ENCODE measurements at regions of chr13 and their contacts with region 1.

Region 1: DNA sequence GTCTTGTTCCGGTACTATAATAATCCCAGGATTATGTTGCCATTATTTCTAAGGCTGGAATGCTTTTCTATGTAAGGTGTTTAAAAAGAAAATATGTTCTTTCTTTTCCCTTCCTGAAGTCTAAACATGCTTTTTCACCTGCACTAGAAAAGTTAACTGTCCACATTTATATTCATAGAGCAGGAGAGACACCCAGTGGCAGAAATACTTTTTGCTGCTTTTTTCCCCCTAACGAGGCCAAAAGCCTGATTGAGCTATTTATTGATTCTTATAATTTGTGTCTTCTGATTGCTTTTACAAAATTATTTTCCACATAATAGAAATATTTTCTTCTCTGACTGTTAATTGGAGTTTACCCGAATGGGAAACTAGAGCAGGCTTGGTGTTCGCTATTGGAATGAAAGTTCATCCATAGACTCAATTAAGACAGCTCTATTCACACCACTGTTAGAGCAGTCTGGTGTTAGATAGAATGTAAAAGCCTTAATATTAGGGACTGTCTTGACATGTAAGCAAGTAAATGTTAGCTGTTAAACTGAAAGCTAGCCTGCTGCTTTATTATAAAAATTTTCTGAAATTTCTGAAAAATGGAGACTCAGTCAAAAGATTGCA is 15.8 kb downstream of the GPR180 start:
- DNase-seq: no peak
- H3K4me3 ChIP-seq: no peak overlapping the region
- H3K27ac ChIP-seq: no peak overlapping the region
- H3K4me1 ChIP-seq: no peaks in the 10 kb centered on the region
- H3K27me3 ChIP-seq: no peaks in the 10 kb centered on the region
- CTCF ChIP-seq: peak; percentile 5 to 65 (median 35)

Region 2: DNA sequence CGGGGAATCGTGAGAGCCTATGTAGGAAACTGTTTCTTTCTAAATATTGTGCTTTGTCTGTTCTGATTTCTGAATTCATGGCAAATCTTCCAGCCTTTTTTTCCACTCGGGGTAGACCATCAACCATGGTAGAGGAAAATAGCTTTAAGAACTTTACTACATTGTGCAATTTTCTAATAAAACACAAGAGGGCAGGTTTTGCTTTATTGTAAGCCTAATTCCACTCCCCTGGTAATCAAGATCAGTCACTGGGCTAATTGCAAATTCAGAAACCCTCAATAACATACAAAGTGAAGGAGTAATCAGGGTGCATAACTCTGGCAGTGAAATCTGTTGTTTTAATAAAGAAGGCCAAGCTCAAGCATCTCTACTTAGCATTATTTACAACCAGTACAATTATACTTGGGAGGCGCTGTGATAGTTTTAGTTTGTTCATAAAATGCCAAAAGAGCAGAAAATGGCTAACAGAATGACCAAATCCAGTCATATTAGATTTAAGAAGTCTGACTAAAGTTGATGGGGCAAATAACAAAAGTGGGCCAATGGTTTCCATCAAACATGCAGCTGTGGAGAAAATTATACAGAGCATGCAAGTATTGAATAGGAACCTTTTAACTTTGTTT is 181.8 kb before region 1 on chr13:
- intact Hi-C with region 1: loop called (anchors 1 kb)
- DNase-seq: no peak
- H3K4me3 ChIP-seq: no peak overlapping the region
- H3K27ac ChIP-seq: no peak overlapping the region
- H3K4me1 ChIP-seq: no peaks in the 10 kb centered on the region
- H3K27me3 ChIP-seq: no peaks in the 10 kb centered on the region
- CTCF ChIP-seq: peak in 2 of 3 experiments; percentile 20 to 61